ENCODE measurements at regions of chr5 and their contacts with region 1.

Region 1: DNA sequence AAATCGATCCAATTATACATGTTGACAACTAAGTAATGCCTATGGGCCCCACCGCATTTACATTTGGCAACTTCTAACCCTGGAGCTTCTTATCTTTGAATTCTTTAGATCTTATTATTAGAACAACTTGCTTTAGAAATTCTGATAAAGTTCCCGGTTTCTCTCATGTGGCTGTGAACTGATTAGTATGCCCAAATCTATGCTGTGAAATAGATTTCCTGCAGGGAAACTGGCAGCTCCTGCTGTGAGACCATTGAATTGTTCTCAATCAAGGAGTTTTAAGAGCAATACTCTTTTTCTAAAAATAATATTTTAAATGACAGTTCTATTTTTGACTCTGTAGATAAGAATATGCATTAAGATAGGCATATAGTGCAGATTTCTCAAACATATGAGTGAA is 177.5 kb downstream of the GABRB2 start:
- DNase-seq: no peak
- ATAC-seq: no peak
- H3K4me3 ChIP-seq: no peak overlapping the region
- H3K27ac ChIP-seq: no peak overlapping the region
- H3K4me1 ChIP-seq: no peaks in the 10 kb centered on the region
- H3K27me3 ChIP-seq: no peaks in the 10 kb centered on the region
- CTCF ChIP-seq: no peak

Region 2: GRCh38 chr5:160887777-160888176 is 481.2 kb before region 1 on chr5:
- intact Hi-C with region 1: loop called in 1 of 10 experiments (anchors 5 kb)
- DNase-seq: no peak
- ATAC-seq: no peak
- H3K4me3 ChIP-seq: no peak overlapping the region
- H3K27ac ChIP-seq: no peak overlapping the region
- H3K4me1 ChIP-seq: no peaks in the 10 kb centered on the region
- H3K27me3 ChIP-seq: no peaks in the 10 kb centered on the region
- CTCF ChIP-seq: no peak

Region 3: DNA sequence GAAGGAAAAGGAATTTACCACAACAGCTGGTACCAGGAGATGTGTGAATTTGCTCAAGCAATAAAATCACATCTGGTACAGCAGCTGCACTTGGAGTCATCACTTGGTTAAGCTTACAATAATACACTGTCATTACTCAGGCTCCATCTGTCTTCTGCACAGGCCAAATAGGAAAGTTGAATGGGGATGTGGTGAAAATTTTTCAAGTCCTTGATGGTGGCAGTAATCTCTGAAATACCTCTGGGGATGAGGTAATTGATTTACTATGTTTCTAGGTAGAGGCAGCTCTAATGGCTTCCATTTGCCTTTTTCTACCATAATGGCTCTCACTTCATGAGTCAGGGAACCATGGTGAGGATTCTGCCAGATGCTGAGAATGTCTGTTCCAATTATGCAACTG is 310.2 kb before region 1 on chr5:
- intact Hi-C with region 1: no loop called
- DNase-seq: no peak
- ATAC-seq: no peak
- H3K4me3 ChIP-seq: no peak overlapping the region
- H3K27ac ChIP-seq: no peak overlapping the region
- H3K4me1 ChIP-seq: no peaks in the 10 kb centered on the region
- H3K27me3 ChIP-seq: no peaks in the 10 kb centered on the region
- CTCF ChIP-seq: no peak

Region 4: GRCh38 chr5:161585798-161586197 is 216.8 kb after region 1 on chr5:
- intact Hi-C with region 1: no loop called
- DNase-seq: no peak
- ATAC-seq: no peak
- H3K4me3 ChIP-seq: no peak overlapping the region
- H3K27ac ChIP-seq: no peak overlapping the region
- H3K4me1 ChIP-seq: no peaks in the 10 kb centered on the region
- H3K27me3 ChIP-seq: no peaks in the 10 kb centered on the region
- CTCF ChIP-seq: no peak

Measured in heart right ventricle (tissue), 16 donors.